CD14-positive monocyte (primary cell): ENCODE measurements at regions of chr16 and their contacts with region 1.

Region 1: GRCh38 chr16:27052007-27052406 is 14.7 kb upstream of the C16orf82 start:
- DNase-seq: no peak
- H3K4me3 ChIP-seq: no peak overlapping the region
- H3K4me3 Mint-ChIP-seq: no peak overlapping the region
- H3K27ac ChIP-seq: no peak overlapping the region
- H3K27ac Mint-ChIP-seq: no peak overlapping the region
- H3K4me1 ChIP-seq: no peaks in the 10 kb centered on the region
- H3K4me1 Mint-ChIP-seq: no peaks in the 10 kb centered on the region
- H3K27me3 ChIP-seq: no peaks in the 10 kb centered on the region
- H3K27me3 Mint-ChIP-seq: peaks cover 0 to 2% (median 0%) of the 10 kb centered on the region in 3 donors
- CTCF ChIP-seq: no peak

Region 2: DNA sequence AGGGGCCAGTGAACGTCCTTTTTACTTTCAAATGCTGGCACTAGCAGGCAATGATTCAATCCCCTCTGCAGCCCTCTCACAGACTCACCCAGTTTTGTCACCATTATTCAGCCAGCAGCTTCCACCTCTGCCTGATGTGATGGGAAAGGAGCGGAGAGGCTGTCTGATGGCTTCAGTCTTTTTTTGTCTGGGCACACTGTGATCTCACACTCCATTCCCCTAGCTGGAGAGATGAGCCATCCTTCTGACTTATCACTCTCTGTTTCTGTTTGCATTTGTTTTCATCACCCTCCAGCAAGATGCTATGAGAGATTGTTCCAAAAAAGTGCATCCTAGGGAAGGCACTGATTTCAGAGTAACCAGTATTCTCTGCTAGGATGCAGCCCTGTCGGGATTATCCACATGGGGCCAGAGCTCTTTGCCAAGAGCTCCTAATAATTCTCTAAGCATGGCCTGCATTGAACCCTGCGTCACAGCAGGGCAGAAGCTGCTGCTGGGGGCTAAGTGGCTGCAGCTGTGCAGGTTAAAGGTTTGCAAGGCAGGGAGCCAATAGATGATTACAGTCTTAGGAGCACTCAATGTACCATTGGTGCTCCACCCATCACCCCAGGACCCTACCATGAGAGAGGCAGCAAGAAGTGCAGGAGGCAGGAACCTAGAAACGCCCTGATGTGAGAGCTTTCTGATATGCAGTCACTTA is 221.4 kb before region 1 on chr16:
- intact Hi-C with region 1: no loop called
- DNase-seq: no peak
- H3K4me3 ChIP-seq: no peak overlapping the region
- H3K4me3 Mint-ChIP-seq: no peak overlapping the region
- H3K27ac ChIP-seq: no peak overlapping the region
- H3K27ac Mint-ChIP-seq: no peak overlapping the region
- H3K4me1 ChIP-seq: no peaks in the 10 kb centered on the region
- H3K4me1 Mint-ChIP-seq: no peaks in the 10 kb centered on the region
- H3K27me3 ChIP-seq: no peaks in the 10 kb centered on the region
- H3K27me3 Mint-ChIP-seq: peaks cover 2 to 7% (median 3%) of the 10 kb centered on the region in 3 donors
- CTCF ChIP-seq: no peak

Region 3: GRCh38 chr16:28258567-28258966 is 1206.6 kb after region 1 on chr16:
- intact Hi-C with region 1: loop called in 1 of 2 experiments (anchors 10 kb)
- DNase-seq: no peak
- H3K4me3 ChIP-seq: no peak overlapping the region
- H3K4me3 Mint-ChIP-seq: no peak overlapping the region
- H3K27ac ChIP-seq: no peak overlapping the region
- H3K27ac Mint-ChIP-seq: no peak overlapping the region
- H3K4me1 ChIP-seq: no peaks in the 10 kb centered on the region
- H3K4me1 Mint-ChIP-seq: no peaks in the 10 kb centered on the region
- H3K27me3 ChIP-seq: no peaks in the 10 kb centered on the region
- H3K27me3 Mint-ChIP-seq: peaks cover 4 to 9% (median 5%) of the 10 kb centered on the region in 3 donors
- CTCF ChIP-seq: no peak